Activated CD4-positive, alpha-beta T cell treated with anti-CD3 and anti-CD28 coated beads, Interleukin-2, amount 10 ng/mL, durations not matched to agents 24 days and 14 days (primary cell): ENCODE measurements at regions of chr19 and their contacts with region 1.

Region 1: DNA sequence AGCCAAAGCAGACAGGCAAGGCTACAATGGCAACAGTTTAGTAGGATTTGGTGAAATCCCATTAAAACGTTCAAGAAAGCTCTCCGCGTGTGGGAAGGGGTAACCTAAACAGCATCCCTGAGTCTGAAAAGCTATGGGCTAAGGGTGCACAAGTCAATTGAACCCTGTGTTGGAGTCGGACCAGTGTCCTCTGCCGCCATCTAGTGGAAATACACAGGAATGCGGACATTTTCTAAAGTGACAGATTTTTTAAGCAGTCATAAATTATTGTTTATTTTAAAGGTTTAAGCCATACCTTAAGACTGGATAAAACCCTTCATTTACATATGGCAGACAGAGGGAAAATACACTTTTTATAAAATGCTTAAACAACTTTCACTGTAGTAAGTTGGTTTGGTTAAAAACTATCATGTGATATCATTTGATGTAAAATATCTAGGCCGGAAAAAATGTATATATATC is 26.5 kb upstream of the LSM14A start:
- DNase-seq: peak; percentile 87
- H3K4me3 Mint-ChIP-seq: no peak overlapping the region
- H3K27ac Mint-ChIP-seq: no peak overlapping the region
- H3K4me1 Mint-ChIP-seq: peaks cover 2% of the 10 kb centered on the region
- H3K27me3 Mint-ChIP-seq: no peaks in the 10 kb centered on the region

Region 2: GRCh38 chr19:34041925-34042521 is 103.7 kb before region 1 on chr19:
- intact Hi-C with region 1: loop called (anchors 1 kb)
- DNase-seq: peak; percentile 91
- H3K4me3 Mint-ChIP-seq: no peak overlapping the region
- H3K27ac Mint-ChIP-seq: no peak overlapping the region
- H3K4me1 Mint-ChIP-seq: peaks cover 2% of the 10 kb centered on the region
- H3K27me3 Mint-ChIP-seq: no peaks in the 10 kb centered on the region

Region 3: DNA sequence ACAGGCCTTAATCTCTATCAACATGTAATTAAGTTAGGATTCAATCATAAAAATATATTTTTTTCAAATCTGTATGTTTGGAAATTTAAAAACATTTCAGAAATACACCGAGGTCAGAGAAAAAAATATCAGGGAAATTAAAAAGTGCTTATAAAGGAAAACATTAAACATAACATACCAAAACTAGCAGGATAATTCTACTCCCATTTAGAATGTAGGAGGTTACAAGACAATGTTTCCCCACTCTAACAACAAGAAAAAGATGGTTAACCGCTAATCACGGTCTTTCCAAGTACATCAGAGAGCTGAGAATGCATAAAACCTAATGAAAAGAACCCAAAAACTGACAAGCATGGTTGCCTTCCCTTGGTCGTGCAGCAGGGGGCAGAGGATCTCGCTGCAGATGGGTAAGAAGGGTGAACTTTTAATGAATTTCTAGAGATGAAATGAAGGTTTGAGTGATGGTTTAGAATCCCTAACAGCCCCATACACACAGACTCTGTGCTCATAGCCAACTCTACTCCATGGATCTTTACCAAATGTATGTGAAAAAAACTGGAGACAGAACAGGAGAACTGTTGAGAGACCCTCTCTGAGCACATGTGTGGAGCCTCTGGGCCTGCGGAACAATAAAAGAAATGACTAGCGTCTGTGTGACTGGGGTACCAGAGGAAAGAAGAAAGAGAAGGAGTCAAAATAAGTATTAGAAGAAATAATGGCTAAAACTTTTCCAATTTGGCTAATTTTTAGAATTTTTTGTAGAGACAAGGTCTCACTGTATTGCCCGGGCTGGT is 24.7 kb before region 1 on chr19:
- intact Hi-C with region 1: loop called (anchors 1 kb)
- DNase-seq: peak; percentile 85
- H3K4me3 Mint-ChIP-seq: no peak overlapping the region
- H3K27ac Mint-ChIP-seq: no peak overlapping the region
- H3K4me1 Mint-ChIP-seq: peaks cover 7% of the 10 kb centered on the region
- H3K27me3 Mint-ChIP-seq: peaks cover 17% of the 10 kb centered on the region

Region 4: GRCh38 chr19:34188408-34188807 is 42.6 kb after region 1 on chr19:
- intact Hi-C with region 1: no loop called
- DNase-seq: no peak
- H3K4me3 Mint-ChIP-seq: no peak overlapping the region
- H3K27ac Mint-ChIP-seq: no peak overlapping the region
- H3K4me1 Mint-ChIP-seq: peaks cover 44% of the 10 kb centered on the region
- H3K27me3 Mint-ChIP-seq: no peaks in the 10 kb centered on the region